ENCODE measurements at regions of chr15 and their contacts with region 1.

Region 1: GRCh38 chr15:40782580-40783227 is 12.9 kb downstream of the C15orf62 start:
- DNase-seq: peak; percentile 34 to 68 (median 61)
- H3K4me3 ChIP-seq: no peak overlapping the region
- H3K4me3 Mint-ChIP-seq: no peak overlapping the region
- H3K27ac ChIP-seq: no peak overlapping the region
- H3K27ac Mint-ChIP-seq: no peak overlapping the region
- H3K4me1 ChIP-seq: peaks cover 10 to 11% of the 10 kb centered on the region in 2 donors
- H3K4me1 Mint-ChIP-seq: peaks cover 13% of the 10 kb centered on the region
- H3K27me3 ChIP-seq: no peaks in the 10 kb centered on the region
- H3K27me3 Mint-ChIP-seq: peaks cover 0 to 11% (median 2%) of the 10 kb centered on the region in 3 donors
- CTCF ChIP-seq: peak; percentile 79

Region 2: DNA sequence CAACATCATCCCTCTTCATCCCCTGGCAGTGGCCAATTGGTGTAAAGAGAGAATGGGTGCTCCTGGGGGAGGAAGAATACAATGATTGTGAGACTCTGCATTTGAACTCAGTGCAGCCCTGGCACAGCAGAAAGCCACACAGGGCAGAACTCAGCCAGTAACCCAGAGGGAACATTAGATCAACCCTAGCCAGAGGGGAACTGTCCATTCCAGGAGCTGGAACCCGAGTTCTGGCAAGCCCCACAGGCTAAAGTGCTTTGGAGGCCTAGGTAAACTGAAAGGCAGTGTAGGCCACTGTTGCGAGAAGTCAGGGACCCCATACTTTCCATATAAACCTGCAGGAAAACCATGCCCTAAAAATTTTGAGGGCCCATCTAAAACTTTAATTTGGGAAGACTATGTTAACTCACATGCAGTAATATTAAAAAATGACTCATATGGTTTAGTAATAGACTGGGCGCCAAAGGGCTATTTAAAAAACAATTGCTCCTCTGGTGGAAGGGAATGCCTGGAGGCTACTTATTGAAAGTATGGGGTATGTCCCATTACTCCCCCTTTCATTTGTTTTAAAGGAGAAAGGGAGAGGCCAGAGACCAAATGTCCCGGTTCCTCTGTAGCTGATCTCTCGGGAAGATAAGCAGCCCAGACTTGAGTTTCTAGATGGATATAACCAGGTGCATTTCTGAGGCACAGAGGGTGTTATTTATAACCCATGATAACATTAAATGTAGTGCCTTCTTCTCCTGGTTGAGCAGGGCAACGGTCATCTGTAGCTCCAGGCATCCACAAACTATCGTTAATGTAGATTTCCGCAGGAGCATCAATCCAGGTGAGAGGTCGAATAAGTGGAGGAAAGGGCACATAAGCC is 93.5 kb before region 1 on chr15:
- intact Hi-C with region 1: loop called in 1 of 2 experiments (anchors 10 kb)
- DNase-seq: no peak
- H3K4me3 ChIP-seq: no peak overlapping the region
- H3K4me3 Mint-ChIP-seq: no peak overlapping the region
- H3K27ac ChIP-seq: no peak overlapping the region
- H3K27ac Mint-ChIP-seq: peak overlapping the region in 1 of 7 donors; percentile 72
- H3K4me1 ChIP-seq: peaks cover 8 to 9% of the 10 kb centered on the region in 2 donors
- H3K4me1 Mint-ChIP-seq: peaks cover 8% of the 10 kb centered on the region
- H3K27me3 ChIP-seq: no peaks in the 10 kb centered on the region
- H3K27me3 Mint-ChIP-seq: no peaks in the 10 kb centered on the region
- CTCF ChIP-seq: no peak

Region 3: DNA sequence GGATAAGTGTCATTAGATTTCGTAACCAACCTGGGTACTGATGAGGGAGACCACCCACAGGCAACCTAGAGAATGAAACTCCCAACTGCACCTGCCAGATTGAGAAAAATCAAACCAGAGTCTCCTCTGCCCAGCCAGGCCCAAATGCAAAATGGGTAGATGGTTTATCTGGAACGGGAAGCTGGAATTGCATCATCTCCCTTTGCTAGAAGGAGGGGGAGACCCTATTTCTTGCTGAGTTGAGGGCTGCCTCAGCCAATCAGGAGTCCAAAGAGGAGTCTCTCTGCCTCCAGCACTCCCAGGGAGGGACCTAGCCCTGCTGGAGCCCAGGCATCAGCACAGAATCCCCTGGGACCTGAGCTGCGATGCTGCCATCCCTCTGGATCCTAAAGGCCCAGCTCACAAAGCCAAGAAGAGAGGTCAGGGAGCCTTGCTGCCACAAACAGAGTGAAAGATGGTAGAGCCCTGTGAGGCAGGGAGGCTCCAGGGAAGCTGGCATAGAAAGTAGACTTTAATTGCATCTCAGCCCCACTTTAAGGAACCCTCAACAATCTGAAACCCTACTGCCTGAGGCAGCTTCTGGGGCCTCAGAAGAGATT is 35.7 kb before region 1 on chr15:
- intact Hi-C with region 1: loop called (anchors 5 kb)
- DNase-seq: peak in 2 of 3 donors; percentile 18 to 36
- H3K4me3 ChIP-seq: no peak overlapping the region
- H3K4me3 Mint-ChIP-seq: no peak overlapping the region
- H3K27ac ChIP-seq: peak overlapping the region in 1 of 2 donors; percentile 39
- H3K27ac Mint-ChIP-seq: peak overlapping the region in 5 of 7 donors; percentile 15 to 76 (median 66)
- H3K4me1 ChIP-seq: peaks cover 16 to 18% of the 10 kb centered on the region in 2 donors
- H3K4me1 Mint-ChIP-seq: peaks cover 27% of the 10 kb centered on the region
- H3K27me3 ChIP-seq: no peaks in the 10 kb centered on the region
- H3K27me3 Mint-ChIP-seq: peaks cover 0 to 1% (median 0%) of the 10 kb centered on the region in 3 donors
- CTCF ChIP-seq: no peak